ENCODE measurements at regions of chr4 and their contacts with region 1.

Region 1: GRCh38 chr4:48047421-48047844 is 30.9 kb downstream of the NIPAL1 start:
- DNase-seq: peak; percentile 65
- ATAC-seq: peak; percentile 94
- H3K4me3 Mint-ChIP-seq: peak overlapping the region; percentile 72
- H3K27ac Mint-ChIP-seq: peak overlapping the region; percentile 65
- H3K4me1 Mint-ChIP-seq: peaks cover 63% of the 10 kb centered on the region
- H3K27me3 Mint-ChIP-seq: peaks cover 42% of the 10 kb centered on the region
- CTCF ChIP-seq: no peak

Region 2: GRCh38 chr4:47562297-47562696 is 485.1 kb before region 1 on chr4:
- CTCF ChIA-PET with region 1: no interaction called
- POLR2A ChIA-PET with region 1: no interaction called
- intact Hi-C with region 1: loop called (anchors 10 kb)
- DNase-seq: no peak
- ATAC-seq: no peak
- H3K4me3 Mint-ChIP-seq: no peak overlapping the region
- H3K27ac Mint-ChIP-seq: no peak overlapping the region
- H3K4me1 Mint-ChIP-seq: peaks cover 10% of the 10 kb centered on the region
- H3K27me3 Mint-ChIP-seq: no peaks in the 10 kb centered on the region
- CTCF ChIP-seq: no peak

Region 3: GRCh38 chr4:48016141-48017103 is 31.0 kb before region 1 on chr4 and contains the starts of genes CNGA1 and NIPAL1:
- CTCF ChIA-PET with region 1: interaction called, 3 read pairs
- POLR2A ChIA-PET with region 1: no interaction called
- intact Hi-C with region 1: loop called (anchors 1 kb)
- DNase-seq: peak; percentile 70
- ATAC-seq: peak; percentile 92
- H3K4me3 Mint-ChIP-seq: peak within 1 kb of the TSS; percentile 83
- H3K27ac Mint-ChIP-seq: no peak within 1 kb of the TSS
- H3K4me1 Mint-ChIP-seq: peaks cover 13% of the 10 kb centered on the region
- H3K27me3 Mint-ChIP-seq: peaks cover 40% of the 10 kb centered on the region
- CTCF ChIP-seq: no peak
- total RNA-seq, gene CNGA1: not detected in 2 replicates
- total RNA-seq, gene NIPAL1: 0.69 and 0.73 TPM in 2 replicates

Region 4: DNA sequence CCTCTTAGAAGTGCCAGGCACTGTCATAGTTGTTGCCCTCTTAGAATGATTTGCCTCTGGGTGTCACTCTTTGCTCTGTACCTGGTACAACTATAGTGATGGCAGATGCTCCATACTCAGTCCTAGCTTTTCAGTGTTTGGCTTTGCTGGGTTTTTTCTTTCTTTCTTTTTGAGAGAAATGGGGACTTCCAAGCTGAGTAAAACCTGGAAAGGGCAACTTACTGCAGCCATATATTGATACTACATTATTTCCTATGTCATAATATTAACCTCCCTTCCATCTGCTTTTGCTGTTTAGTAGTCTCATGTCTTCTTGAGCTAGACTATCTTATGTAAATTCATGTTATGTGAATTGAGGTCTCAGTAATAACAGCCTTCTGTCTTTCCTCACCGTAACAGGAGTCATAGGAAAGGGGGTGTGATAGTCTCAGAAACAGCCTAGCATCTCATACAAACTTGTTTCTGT is 18.2 kb after region 1 on chr4:
- CTCF ChIA-PET with region 1: no interaction called
- POLR2A ChIA-PET with region 1: no interaction called
- intact Hi-C with region 1: no loop called
- DNase-seq: no peak
- ATAC-seq: no peak
- H3K4me3 Mint-ChIP-seq: no peak overlapping the region
- H3K27ac Mint-ChIP-seq: no peak overlapping the region
- H3K4me1 Mint-ChIP-seq: no peaks in the 10 kb centered on the region
- H3K27me3 Mint-ChIP-seq: peaks cover 12% of the 10 kb centered on the region
- CTCF ChIP-seq: no peak

Region 5: DNA sequence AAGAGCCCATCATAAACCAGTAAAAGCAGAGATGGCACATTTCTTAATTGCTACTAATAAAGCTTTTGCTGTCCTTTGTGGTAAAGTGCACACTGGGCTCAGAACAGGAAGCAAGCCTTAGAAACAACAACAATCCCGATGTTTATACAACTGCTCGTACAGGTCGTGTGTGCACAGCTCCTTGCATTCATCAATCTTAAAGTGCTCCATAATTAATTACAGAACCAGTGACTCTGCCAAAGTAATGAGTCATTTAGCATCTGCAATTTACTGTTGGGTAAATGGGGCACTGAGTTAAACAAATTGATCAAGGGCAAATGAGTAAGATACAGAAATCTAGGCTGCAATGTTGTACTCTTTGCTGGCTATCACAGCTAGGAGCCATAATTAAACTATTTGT is 147.9 kb after region 1 on chr4:
- CTCF ChIA-PET with region 1: no interaction called
- POLR2A ChIA-PET with region 1: no interaction called
- intact Hi-C with region 1: loop called (anchors 5 kb)
- DNase-seq: no peak
- ATAC-seq: peak; percentile 18
- H3K4me3 Mint-ChIP-seq: peak overlapping the region; percentile 64
- H3K27ac Mint-ChIP-seq: peak overlapping the region; percentile 73
- H3K4me1 Mint-ChIP-seq: peaks cover 70% of the 10 kb centered on the region
- H3K27me3 Mint-ChIP-seq: no peaks in the 10 kb centered on the region
- CTCF ChIP-seq: no peak

Region 6: GRCh38 chr4:48906206-48907173 is 859.1 kb after region 1 on chr4 and contains the start of gene OCIAD2:
- CTCF ChIA-PET with region 1: no interaction called
- POLR2A ChIA-PET with region 1: no interaction called
- intact Hi-C with region 1: loop called (anchors 10 kb)
- DNase-seq: peak; percentile 65
- ATAC-seq: peak; percentile 97
- H3K4me3 Mint-ChIP-seq: peak within 1 kb of the TSS; percentile 97
- H3K27ac Mint-ChIP-seq: peak within 1 kb of the TSS; percentile 86
- H3K4me1 Mint-ChIP-seq: peaks cover 29% of the 10 kb centered on the region
- H3K27me3 Mint-ChIP-seq: no peaks in the 10 kb centered on the region
- CTCF ChIP-seq: no peak
- total RNA-seq, gene OCIAD2: 37.0 and 38.3 TPM in 2 replicates